Breast epithelium (tissue), 4 donors: ENCODE measurements at regions of chr12 and their contacts with region 1.

Region 1: GRCh38 chr12:121773011-121773777 is 20.3 kb downstream of the RHOF start:
- DNase-seq: peak in 1 of 2 donors; percentile 73
- H3K4me3 ChIP-seq: no peak overlapping the region
- H3K27ac ChIP-seq: peak overlapping the region; percentile 55 to 59
- H3K4me1 ChIP-seq: no peaks in the 10 kb centered on the region
- H3K27me3 ChIP-seq: no peaks in the 10 kb centered on the region
- CTCF ChIP-seq: peak; percentile 65 to 87 (median 85)
- POLR2A ChIP-seq: no peak

Region 2: DNA sequence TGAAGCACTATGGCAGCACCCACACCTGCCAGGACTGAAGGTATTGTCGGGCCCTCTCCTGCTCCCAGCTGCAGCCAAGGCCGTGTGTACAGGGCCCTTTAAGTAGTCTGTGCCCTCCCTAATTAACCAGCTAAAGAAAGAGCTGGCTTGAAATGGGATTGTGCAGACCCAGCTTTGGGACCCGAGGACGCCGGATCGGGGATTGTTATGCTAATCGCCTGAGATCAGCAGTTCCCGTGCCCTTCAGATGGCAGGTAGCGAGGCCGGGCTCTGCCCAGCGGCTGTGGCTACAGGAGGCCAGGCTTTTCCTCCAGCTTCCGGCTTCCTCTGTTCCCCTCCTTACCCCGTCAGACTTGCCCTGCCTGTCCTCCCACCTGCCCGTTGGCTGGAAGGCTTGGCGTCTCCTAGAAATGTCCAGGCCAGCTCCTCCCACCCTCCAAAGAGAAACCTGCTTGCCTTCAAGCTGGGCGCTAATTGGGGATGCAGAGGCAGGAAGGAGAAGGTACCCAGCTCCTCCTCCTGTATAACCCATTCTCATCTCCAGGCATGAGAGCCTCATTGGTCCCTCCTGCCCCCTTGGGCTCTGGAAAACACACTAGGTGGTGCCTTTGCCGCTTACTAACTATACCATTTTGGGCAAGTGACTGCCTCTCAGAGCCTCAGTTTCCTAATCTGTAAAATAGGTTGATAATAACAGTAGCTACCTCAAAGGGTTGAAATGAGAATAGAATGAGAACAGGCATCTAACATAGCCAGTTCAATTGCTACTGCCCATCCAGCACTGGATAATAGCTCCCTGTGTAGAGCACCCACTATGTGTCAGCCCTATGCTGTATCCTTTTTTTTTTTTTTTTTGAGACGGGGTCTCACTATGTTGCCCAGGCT is 1378.5 kb before region 1 on chr12:
- intact Hi-C with region 1: no loop called
- DNase-seq: peak; percentile 85 to 89
- H3K4me3 ChIP-seq: peak overlapping the region in 2 of 3 donors; percentile 27 to 39
- H3K27ac ChIP-seq: peak overlapping the region; percentile 78 to 88
- H3K4me1 ChIP-seq: no peaks in the 10 kb centered on the region
- H3K27me3 ChIP-seq: peaks cover 0 to 4% of the 10 kb centered on the region in 2 donors
- CTCF ChIP-seq: no peak
- POLR2A ChIP-seq: peak; percentile 14

Region 3: DNA sequence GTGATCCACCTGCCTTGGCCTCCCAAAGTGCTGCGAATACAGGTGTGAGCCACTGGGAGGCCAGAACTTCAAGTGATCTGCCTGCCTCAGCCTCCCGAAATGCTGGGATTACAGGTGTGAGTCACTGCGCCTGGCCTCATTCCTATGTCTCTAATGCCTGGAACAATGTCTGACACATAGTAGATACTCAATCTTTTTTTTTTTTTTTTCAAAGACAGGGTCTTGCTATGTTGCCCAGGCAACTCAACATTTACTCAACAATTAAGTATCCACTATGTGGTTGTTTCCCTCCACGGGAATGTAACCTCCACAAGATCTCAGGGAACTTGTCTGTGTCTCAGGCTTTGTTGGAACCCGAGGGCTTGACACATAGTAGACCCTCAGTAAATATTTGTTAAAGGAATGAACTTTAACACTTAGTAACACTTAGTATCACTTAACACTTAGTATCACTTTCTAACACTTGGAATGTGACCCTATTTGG is 63.7 kb before region 1 on chr12:
- intact Hi-C with region 1: loop called (anchors 10 kb)
- DNase-seq: no peak
- H3K4me3 ChIP-seq: no peak overlapping the region
- H3K27ac ChIP-seq: no peak overlapping the region
- H3K4me1 ChIP-seq: peaks cover 0 to 5% of the 10 kb centered on the region in 2 donors
- H3K27me3 ChIP-seq: no peaks in the 10 kb centered on the region
- CTCF ChIP-seq: no peak
- POLR2A ChIP-seq: no peak